Cardiac septum (tissue), 1 donor: ENCODE measurements at regions of chr19 and their contacts with region 1.

Region 1: DNA sequence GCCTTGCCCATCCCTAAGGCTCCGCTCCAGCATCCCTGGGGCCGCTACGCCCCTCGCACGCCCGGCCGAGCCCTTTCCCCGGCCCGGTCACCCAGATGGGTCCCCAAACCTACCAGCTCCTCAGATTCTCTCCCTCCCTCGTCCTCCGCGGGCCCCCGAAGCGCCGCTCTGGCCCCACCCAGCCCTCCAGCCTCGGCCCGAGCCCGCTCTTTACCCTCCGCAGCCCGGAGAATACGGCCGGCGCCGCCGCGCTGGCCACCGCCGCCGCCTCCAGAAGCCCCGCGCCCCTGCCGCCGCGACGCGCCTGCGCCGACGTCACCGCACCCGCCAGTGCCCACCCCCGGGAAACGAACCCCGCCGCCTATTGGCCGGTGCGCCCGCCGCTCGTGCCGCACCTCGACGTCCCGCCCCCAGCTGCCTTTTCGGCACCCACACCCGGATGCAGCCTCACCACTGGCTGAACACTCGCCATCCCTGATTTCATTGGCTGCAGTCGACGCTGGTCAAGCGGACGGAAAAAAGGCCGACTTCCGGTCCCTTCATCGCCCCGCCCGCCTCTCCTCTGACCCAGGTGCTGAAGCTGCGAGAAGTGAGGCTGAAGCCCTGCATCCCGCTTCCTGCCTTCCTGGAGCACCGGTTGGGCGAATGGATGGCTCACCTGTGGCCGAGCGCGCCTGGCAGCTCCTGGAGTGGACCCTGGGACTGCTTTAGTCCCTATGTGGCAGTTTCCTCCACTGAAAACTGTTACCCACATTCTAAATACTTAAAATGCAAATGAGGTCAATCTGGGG is at the start of gene DAPK3:
- DNase-seq: peak; percentile 99
- total RNA-seq, gene DAPK3: 180 TPM

Region 2: DNA sequence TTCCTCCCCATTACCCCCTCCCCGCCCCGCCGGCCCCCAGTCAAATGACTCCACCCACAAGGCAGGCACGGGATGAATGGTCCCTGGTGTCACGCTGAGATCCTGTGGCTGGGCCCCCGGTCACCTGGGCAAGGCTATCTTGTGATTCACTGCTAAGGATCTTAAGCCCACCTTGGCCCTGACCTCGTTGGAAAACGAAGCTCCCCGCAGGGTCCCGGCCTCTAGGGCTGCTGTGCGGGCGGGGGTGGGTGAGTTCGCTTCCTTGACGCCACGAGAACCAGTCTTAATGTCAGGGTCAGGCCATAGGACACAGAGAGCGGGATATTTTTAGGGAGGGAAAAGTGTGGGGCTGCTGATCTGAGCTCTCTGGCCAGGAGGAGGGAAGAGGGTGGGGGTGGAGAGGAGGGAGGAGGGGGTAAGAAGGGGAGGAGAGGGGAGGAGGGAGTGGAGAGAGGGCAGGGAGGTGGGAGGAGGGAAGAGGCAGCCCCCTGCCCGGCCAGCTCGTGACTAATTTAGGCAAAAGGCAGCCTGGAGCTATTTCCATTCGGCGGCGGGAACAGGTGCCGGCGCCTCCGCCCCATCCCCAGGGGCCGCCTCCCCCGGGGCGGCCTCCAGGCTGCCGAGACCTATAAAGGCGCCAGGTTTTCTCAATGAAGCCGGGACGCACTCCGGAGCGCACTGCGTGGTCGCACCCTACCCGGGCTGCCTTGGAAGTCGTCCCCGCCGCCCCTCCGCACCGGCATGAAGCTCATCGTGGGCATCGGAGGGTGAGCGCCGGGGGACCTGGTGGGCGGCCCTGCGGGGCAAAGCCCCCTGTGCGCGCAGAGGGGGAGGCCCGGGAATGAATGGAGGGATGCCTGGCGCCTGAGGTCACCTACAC is 37.8 kb before region 1 on chr19 and contains the start of gene NMRK2:
- intact Hi-C with region 1: loop called (anchors 5 kb)
- DNase-seq: peak; percentile 80
- total RNA-seq, gene NMRK2: 568 TPM

Region 3: DNA sequence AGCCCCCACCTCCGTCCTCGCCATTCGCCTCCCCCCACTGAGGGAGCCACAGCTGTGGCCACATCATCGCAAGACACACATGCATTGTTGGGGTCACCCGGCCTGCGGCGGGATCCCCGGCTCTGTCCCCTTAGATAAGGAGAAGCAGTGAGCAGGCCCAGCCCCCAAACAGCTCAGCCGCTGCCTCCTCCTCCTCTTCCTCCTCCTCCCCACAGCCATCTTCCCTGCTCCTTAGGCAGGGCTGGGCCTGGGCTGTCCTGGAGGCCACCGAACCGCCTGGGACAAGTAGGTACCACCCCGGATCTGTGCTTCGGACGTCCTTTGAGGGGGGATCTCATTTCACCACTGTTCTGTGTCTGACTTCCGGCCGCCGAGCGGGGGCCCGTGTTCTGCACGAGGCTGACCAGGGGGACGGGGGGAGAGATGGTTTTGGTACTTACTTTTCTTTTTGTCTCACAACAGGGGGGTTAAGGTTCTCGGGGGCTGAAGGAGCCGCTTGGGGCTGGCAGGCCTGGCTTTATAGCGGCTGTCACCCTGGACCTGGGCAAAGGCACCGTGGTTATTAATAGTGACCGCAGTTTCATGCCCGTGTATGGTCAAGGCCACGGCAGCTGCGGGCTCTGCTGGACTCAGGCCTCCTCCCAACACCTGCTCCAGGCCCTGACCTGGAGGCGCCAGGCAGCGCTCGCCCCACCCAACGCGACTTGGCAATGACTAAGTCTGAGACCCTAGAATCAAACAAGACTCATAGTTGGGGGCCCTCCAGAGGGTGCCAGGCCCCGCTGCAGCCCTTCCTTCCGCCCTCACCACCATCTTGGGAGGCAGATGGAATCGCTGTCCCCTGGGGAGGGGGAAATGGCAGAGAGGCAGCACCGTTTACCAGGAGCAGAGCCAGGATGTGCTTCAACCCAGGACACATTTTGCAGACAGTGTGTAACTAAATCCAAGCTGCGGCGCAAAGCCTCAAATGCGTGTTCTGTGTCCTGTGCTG is 19.8 kb before region 1 on chr19:
- intact Hi-C with region 1: loop called (anchors 2 kb)
- DNase-seq: peak; percentile 87